ENCODE measurements at regions of chr1 and their contacts with region 1.

Region 1: DNA sequence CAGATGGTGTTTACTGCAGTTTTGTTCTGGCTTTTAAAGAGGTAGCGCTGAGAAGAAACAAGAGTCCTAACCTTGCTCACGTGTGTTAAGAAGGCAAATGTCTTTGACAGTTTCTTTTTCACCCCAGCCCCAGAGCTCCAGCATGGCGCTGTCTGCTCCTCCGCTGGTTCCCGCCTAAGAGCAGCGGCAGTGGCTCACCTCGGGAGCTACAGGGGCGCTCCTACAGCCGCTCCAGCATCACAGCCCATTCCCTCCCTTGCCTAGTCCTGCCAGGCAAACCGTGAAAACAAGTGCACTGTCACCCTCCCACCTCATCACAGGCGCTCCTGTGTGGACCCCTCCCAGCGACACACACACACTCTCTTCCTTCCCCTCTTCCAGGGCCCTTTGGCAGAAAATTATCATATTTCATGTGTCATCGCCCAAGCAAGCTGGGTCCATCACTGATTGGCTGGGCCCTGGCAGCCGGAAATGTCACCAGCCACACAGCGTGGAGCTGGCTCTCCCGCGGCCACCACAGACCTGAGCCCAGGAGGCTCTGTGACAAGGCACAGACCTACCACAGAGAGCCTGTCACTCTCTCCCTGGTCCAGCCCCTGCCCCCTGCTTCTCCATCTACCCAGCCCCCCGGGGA is 1.2 kb upstream of the HIVEP3 start:
- DNase-seq: peak; percentile 93
- H3K4me3 Mint-ChIP-seq: peak overlapping the region; percentile 93
- H3K27ac Mint-ChIP-seq: peak overlapping the region; percentile 93
- H3K4me1 Mint-ChIP-seq: peaks cover 56% of the 10 kb centered on the region
- H3K27me3 Mint-ChIP-seq: no peaks in the 10 kb centered on the region

Region 2: DNA sequence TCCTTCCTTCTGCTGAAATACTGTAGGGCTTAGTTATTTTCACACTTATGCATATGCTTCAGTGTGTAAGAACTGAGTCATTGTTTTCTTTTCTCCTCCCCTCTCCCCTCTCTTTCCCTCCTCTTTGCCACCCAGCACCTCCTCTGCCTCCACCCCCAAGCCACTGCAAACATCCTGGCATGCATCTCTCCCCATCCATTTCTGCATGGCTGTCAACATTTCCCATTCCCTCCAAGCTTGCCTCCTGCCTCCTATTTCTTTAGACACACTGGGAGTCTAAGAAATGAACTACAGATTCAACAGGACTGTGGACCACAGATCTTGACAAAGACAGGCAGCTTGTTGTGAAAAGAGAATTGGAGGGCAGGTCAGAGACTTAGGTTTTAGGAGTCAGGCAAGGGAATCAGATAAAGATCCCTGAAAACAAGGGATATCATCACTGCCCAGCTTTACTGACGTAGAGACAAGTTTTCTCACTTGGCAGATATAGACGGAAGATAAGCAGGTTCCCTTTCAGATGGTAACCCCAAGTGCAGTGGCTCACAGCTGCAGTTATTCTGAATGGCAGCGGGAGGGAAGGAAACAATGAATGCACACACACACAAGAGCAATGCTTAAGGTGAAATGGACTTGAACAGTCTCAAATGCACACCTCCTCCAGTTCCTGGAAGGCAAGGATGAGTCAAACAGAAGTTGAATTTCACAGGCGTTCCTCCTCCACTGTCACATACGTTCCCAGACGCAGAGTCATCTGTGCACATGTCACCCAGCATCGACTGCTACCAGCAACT is 57.3 kb before region 1 on chr1:
- CTCF ChIA-PET with region 1: no interaction called
- POLR2A ChIA-PET with region 1: interaction called, 19 read pairs
- DNase-seq: peak; percentile 64
- H3K4me3 Mint-ChIP-seq: no peak overlapping the region
- H3K27ac Mint-ChIP-seq: peak overlapping the region; percentile 71
- H3K4me1 Mint-ChIP-seq: peaks cover 33% of the 10 kb centered on the region
- H3K27me3 Mint-ChIP-seq: no peaks in the 10 kb centered on the region

Region 3: GRCh38 chr1:41874903-41875411 is 44.9 kb before region 1 on chr1:
- CTCF ChIA-PET with region 1: no interaction called
- POLR2A ChIA-PET with region 1: no interaction called
- DNase-seq: no peak
- H3K4me3 Mint-ChIP-seq: no peak overlapping the region
- H3K27ac Mint-ChIP-seq: no peak overlapping the region
- H3K4me1 Mint-ChIP-seq: peaks cover 20% of the 10 kb centered on the region
- H3K27me3 Mint-ChIP-seq: no peaks in the 10 kb centered on the region

Region 4: DNA sequence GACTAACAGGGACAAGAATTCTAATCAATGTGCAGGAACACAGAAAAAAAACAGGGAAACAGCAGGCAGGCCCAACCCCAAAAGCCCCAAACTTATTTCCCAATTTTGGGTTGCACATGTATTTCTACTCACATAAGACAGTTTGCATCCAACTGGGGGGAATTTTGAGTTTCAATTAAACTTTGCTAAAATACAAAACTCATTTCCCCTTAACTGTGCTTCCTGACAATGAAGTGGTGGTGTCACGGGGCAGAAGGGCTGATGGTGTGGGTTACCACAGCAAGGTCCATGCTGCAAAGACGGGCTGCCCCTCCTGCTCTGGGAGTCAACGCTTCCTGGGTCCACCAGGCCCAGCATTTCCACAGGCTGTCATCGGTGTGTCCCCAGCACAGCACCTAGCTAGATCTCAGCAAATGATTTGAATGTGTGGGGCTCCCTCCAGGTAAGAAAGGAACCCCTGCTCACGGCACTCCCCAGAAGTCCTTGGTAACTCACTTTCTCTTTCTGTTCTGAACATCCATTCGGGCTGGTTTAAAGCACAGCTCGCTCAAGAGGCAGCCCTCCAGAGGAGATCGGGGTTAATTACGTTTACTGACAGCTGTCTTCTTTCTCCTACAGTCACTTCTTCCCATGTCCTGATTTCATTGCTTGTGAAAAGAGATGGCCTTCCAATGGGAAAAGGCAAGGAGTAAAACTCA is 28.5 kb before region 1 on chr1:
- CTCF ChIA-PET with region 1: interaction called, 72 read pairs
- POLR2A ChIA-PET with region 1: interaction called, 231 read pairs
- DNase-seq: peak; percentile 70
- H3K4me3 Mint-ChIP-seq: peak overlapping the region; percentile 79
- H3K27ac Mint-ChIP-seq: peak overlapping the region; percentile 94
- H3K4me1 Mint-ChIP-seq: peaks cover 75% of the 10 kb centered on the region
- H3K27me3 Mint-ChIP-seq: no peaks in the 10 kb centered on the region

Region 5: GRCh38 chr1:41898191-41898713 is 21.6 kb before region 1 on chr1:
- CTCF ChIA-PET with region 1: interaction called, 72 read pairs
- POLR2A ChIA-PET with region 1: interaction called, 231 read pairs
- DNase-seq: peak; percentile 90
- H3K4me3 Mint-ChIP-seq: peak overlapping the region; percentile 60
- H3K27ac Mint-ChIP-seq: peak overlapping the region; percentile 98
- H3K4me1 Mint-ChIP-seq: peaks cover 87% of the 10 kb centered on the region
- H3K27me3 Mint-ChIP-seq: no peaks in the 10 kb centered on the region

Region 6: GRCh38 chr1:42035830-42036604 is 116.1 kb after region 1 on chr1:
- CTCF ChIA-PET with region 1: interaction called, 3 read pairs
- POLR2A ChIA-PET with region 1: interaction called, 25 read pairs
- DNase-seq: peak; percentile 98
- H3K4me3 Mint-ChIP-seq: peak overlapping the region; percentile 78
- H3K27ac Mint-ChIP-seq: peak overlapping the region; percentile 8
- H3K4me1 Mint-ChIP-seq: peaks cover 40% of the 10 kb centered on the region
- H3K27me3 Mint-ChIP-seq: peaks cover 6% of the 10 kb centered on the region

Measured in activated CD4-positive, alpha-beta memory T cell treated with anti-CD3 and anti-CD28 coated beads, Interleukin-2, amount 10 ng/mL, durations not matched to agents 7 days and 5 days (primary cell).